ENCODE measurements at regions of chr3 and their contacts with region 1.

Region 1: GRCh38 chr3:138774529-138775253 is 60.0 kb downstream of the PIK3CB start:
- H3K4me3 Mint-ChIP-seq: no peak overlapping the region
- H3K27ac Mint-ChIP-seq: peak overlapping the region; percentile 25
- H3K4me1 Mint-ChIP-seq: peaks cover 28% of the 10 kb centered on the region
- H3K27me3 Mint-ChIP-seq: no peaks in the 10 kb centered on the region

Region 2: DNA sequence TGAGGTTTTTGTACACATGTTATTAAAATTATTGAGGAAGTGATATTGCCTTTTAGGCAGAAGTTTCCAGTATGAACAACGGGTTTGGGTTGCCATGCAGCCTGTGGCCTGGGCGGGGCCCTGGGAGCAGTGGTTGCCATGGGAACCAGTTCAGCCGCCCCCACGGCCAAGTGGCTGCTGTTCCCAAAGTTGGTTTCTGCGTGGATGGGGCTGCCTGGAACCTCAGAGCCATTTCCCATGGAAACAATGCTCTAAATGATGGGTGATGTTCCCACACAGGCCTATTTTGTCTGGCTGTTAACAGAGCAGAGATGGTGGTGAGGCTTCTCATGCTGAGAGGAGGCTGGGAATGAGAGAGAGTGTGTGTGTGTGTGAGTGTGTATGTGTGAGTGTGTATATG is 406.8 kb before region 1 on chr3:
- intact Hi-C with region 1: no loop called
- H3K4me3 Mint-ChIP-seq: peak overlapping the region; percentile 47
- H3K27ac Mint-ChIP-seq: peak overlapping the region; percentile 95
- H3K4me1 Mint-ChIP-seq: peaks cover 85% of the 10 kb centered on the region
- H3K27me3 Mint-ChIP-seq: no peaks in the 10 kb centered on the region

Region 3: DNA sequence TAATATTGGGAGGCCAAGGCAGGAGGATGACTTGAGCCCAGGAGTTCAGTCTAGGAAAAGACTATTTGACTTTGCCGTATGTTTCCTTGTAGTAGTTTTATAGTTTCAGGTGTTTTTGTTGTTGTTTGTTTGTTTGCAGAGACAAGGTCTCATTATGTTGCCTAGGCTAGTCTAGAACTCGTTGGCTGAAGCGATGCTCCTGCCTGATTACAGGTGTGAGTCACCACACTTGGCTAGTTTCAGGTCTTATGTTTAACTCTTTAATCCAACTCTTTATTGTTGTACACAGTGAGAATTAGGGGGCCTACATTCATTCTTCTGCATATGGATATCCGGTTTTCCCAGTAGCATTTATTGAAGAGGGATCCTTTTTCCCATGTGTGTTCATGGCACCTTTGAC is 134.2 kb before region 1 on chr3:
- intact Hi-C with region 1: no loop called
- H3K4me3 Mint-ChIP-seq: no peak overlapping the region
- H3K27ac Mint-ChIP-seq: no peak overlapping the region
- H3K4me1 Mint-ChIP-seq: no peaks in the 10 kb centered on the region
- H3K27me3 Mint-ChIP-seq: no peaks in the 10 kb centered on the region

Region 4: DNA sequence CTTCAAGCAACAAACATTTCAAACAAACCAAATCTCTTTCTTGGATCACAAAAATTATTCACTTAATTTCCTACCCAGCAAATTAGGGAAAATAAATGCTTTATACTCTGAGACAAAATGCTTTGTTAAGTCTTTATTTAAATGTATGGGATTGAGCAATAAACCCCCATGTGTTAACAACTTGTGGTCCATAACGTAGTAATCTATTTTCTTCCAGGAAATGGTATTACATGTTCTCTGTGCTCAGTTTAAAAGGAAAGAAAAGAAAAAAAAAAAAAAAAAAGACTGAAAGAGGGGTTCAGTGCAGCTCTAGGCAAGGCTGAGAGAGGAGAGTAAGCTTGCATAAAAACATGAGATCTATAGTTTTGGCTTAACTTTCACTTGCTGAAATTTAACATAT is 42.2 kb before region 1 on chr3:
- intact Hi-C with region 1: no loop called
- H3K4me3 Mint-ChIP-seq: no peak overlapping the region
- H3K27ac Mint-ChIP-seq: peak overlapping the region; percentile 60
- H3K4me1 Mint-ChIP-seq: peaks cover under 1% of the 10 kb centered on the region
- H3K27me3 Mint-ChIP-seq: no peaks in the 10 kb centered on the region

Region 5: GRCh38 chr3:138812806-138813205 is 38.1 kb after region 1 on chr3:
- intact Hi-C with region 1: loop called (anchors 5 kb)
- H3K4me3 Mint-ChIP-seq: no peak overlapping the region
- H3K27ac Mint-ChIP-seq: no peak overlapping the region
- H3K4me1 Mint-ChIP-seq: peaks cover 32% of the 10 kb centered on the region
- H3K27me3 Mint-ChIP-seq: no peaks in the 10 kb centered on the region

Measured in dendritic cell treated with granulocyte-macrophage colony-stimulating factor and Interleukin-4, amounts not matched to agents 40 ng/mL and 50 ng/mL, for 4 days (primary cell).